B cell (primary cell): ENCODE measurements at regions of chr20 and their contacts with region 1.

Region 1: GRCh38 chr20:62386383-62387218 is at the start of gene RPS21:
- DNase-seq: peak; percentile 95
- ATAC-seq: peak; percentile 87
- H3K4me3 ChIP-seq: peak within 1 kb of the TSS; percentile 78 to 93 (median 91)
- H3K4me3 Mint-ChIP-seq: peak within 1 kb of the TSS; percentile 94
- H3K27ac ChIP-seq: peak within 1 kb of the TSS; percentile 88 to 89
- H3K27ac Mint-ChIP-seq: peak within 1 kb of the TSS; percentile 94
- H3K4me1 ChIP-seq: peaks cover 18 to 34% of the 10 kb centered on the region in 2 donors
- H3K4me1 Mint-ChIP-seq: peaks cover 48% of the 10 kb centered on the region
- H3K27me3 ChIP-seq: no peaks in the 10 kb centered on the region
- H3K27me3 Mint-ChIP-seq: no peaks in the 10 kb centered on the region
- CTCF ChIP-seq: no peak
- total RNA-seq, gene RPS21: 2,429 and 2,653 TPM in 2 replicates

Region 2: DNA sequence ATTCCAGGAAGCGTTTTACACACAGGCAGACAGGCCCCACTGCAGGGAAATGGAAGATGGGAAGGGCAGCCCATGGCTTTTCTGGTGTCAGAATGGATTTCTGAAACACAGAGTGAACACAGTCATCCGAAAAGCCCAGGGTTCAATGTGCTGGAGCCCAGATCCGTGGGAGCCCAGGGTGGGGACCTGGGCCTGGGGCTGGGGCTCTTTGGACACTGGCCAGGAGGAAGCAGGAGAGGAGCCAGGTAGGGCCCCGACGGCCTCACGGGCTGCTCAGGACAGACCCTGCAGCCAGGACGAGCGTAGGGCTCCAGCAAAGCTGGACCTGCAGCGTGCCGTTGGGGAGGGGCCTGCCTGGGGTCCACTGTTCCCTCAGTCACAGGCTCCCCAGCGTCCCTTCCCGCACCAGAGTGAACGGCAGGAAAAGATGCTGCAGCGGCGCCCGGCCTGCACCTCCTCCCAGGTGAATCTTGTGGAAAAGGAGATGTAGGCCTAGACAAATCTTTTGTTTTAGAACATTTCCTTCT is 288.7 kb before region 1 on chr20:
- CTCF ChIA-PET with region 1: no interaction called
- POLR2A ChIA-PET with region 1: no interaction called
- intact Hi-C with region 1: no loop called
- DNase-seq: no peak
- ATAC-seq: no peak
- H3K4me3 ChIP-seq: no peak overlapping the region
- H3K4me3 Mint-ChIP-seq: no peak overlapping the region
- H3K27ac ChIP-seq: no peak overlapping the region
- H3K27ac Mint-ChIP-seq: no peak overlapping the region
- H3K4me1 ChIP-seq: no peaks in the 10 kb centered on the region
- H3K4me1 Mint-ChIP-seq: no peaks in the 10 kb centered on the region
- H3K27me3 ChIP-seq: peaks cover 0 to 13% (median 3%) of the 10 kb centered on the region in 4 experiments
- H3K27me3 Mint-ChIP-seq: peaks cover 15% of the 10 kb centered on the region
- CTCF ChIP-seq: no peak

Region 3: GRCh38 chr20:62182613-62183425 is 203.8 kb before region 1 on chr20 and contains the start of gene MTG2:
- CTCF ChIA-PET with region 1: no interaction called
- POLR2A ChIA-PET with region 1: no interaction called
- intact Hi-C with region 1: loop called (anchors 2 kb)
- DNase-seq: peak; percentile 96
- ATAC-seq: peak; percentile 90
- H3K4me3 ChIP-seq: peak within 1 kb of the TSS; percentile 81 to 88 (median 84)
- H3K4me3 Mint-ChIP-seq: peak within 1 kb of the TSS; percentile 97
- H3K27ac ChIP-seq: peak within 1 kb of the TSS; percentile 86 to 97
- H3K27ac Mint-ChIP-seq: peak within 1 kb of the TSS; percentile 98
- H3K4me1 ChIP-seq: peaks cover 13 to 18% of the 10 kb centered on the region in 2 donors
- H3K4me1 Mint-ChIP-seq: peaks cover 39% of the 10 kb centered on the region
- H3K27me3 ChIP-seq: no peaks in the 10 kb centered on the region
- H3K27me3 Mint-ChIP-seq: no peaks in the 10 kb centered on the region
- CTCF ChIP-seq: no peak
- total RNA-seq, gene MTG2: 47.6 and 48.4 TPM in 2 replicates

Region 4: GRCh38 chr20:62339647-62340070 is 46.9 kb before region 1 on chr20:
- CTCF ChIA-PET with region 1: interaction called, 16 read pairs
- POLR2A ChIA-PET with region 1: interaction called, 8 read pairs
- intact Hi-C with region 1: loop called (anchors 5 kb)
- DNase-seq: peak; percentile 90
- ATAC-seq: peak; percentile 59
- H3K4me3 ChIP-seq: peak overlapping the region in 4 of 5 experiments; percentile 31 to 68 (median 50)
- H3K4me3 Mint-ChIP-seq: peak overlapping the region; percentile 84
- H3K27ac ChIP-seq: peak overlapping the region; percentile 86 to 87
- H3K27ac Mint-ChIP-seq: peak overlapping the region; percentile 95
- H3K4me1 ChIP-seq: peaks cover 53 to 61% of the 10 kb centered on the region in 2 donors
- H3K4me1 Mint-ChIP-seq: peaks cover 48% of the 10 kb centered on the region
- H3K27me3 ChIP-seq: no peaks in the 10 kb centered on the region
- H3K27me3 Mint-ChIP-seq: no peaks in the 10 kb centered on the region
- CTCF ChIP-seq: no peak

Region 5: GRCh38 chr20:62357187-62357667 is 29.4 kb before region 1 on chr20:
- CTCF ChIA-PET with region 1: no interaction called
- POLR2A ChIA-PET with region 1: no interaction called
- intact Hi-C with region 1: no loop called
- DNase-seq: no peak
- ATAC-seq: no peak
- H3K4me3 ChIP-seq: no peak overlapping the region
- H3K4me3 Mint-ChIP-seq: no peak overlapping the region
- H3K27ac ChIP-seq: no peak overlapping the region
- H3K27ac Mint-ChIP-seq: no peak overlapping the region
- H3K4me1 ChIP-seq: peaks cover 0 to 6% of the 10 kb centered on the region in 2 donors
- H3K4me1 Mint-ChIP-seq: no peaks in the 10 kb centered on the region
- H3K27me3 ChIP-seq: no peaks in the 10 kb centered on the region
- H3K27me3 Mint-ChIP-seq: no peaks in the 10 kb centered on the region
- CTCF ChIP-seq: no peak

Region 6: DNA sequence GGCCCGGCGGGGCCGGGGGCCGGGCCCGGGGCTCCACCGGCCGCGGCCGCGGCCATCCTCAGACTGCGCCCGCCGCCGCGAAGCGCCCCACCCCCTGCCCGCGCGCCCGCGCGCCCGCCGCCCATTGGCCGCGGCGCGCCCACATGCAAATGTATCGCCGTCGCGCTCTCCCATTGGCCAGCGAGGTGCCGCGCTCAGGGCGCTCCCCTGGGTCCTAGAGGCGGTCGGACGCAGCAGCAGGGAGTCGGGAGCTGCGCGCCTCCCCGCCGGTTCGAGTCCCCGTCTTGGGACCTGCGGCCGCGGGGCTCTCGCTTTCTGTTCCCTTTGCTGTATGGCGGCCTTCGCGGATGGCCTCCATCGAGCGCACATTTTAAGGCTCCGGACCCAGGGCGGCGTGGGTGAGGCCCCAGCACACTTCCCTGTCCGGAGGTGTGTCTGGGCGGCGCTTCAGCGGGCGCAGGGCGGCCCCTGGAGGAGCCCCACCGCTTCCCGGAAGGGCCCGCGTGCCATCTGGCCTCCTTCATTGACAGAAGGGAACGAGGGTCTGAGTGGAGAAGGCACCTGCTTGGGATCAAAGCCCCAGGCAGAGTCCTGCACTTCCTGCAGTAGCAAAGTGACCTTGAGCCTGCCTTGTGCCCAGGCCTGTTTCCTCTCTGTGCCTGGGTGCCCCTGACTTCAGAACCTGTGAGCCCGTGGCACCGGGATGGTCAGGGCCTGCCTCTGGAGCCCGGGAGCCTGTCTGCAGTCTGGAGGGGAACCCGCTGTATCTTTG is 20.8 kb after region 1 on chr20 and contains the start of gene CABLES2:
- CTCF ChIA-PET with region 1: interaction called, 7 read pairs
- POLR2A ChIA-PET with region 1: interaction called, 7 read pairs
- intact Hi-C with region 1: loop called (anchors 1 kb)
- DNase-seq: peak; percentile 95
- ATAC-seq: peak; percentile 90
- H3K4me3 ChIP-seq: peak within 1 kb of the TSS; percentile 36 to 71 (median 67)
- H3K4me3 Mint-ChIP-seq: peak within 1 kb of the TSS; percentile 90
- H3K27ac ChIP-seq: peak within 1 kb of the TSS; percentile 59 to 66
- H3K27ac Mint-ChIP-seq: peak within 1 kb of the TSS; percentile 87
- H3K4me1 ChIP-seq: peaks cover 30 to 41% of the 10 kb centered on the region in 2 donors
- H3K4me1 Mint-ChIP-seq: peaks cover 30% of the 10 kb centered on the region
- H3K27me3 ChIP-seq: no peaks in the 10 kb centered on the region
- H3K27me3 Mint-ChIP-seq: no peaks in the 10 kb centered on the region
- CTCF ChIP-seq: no peak
- total RNA-seq, gene CABLES2: 8.2 and 8.6 TPM in 2 replicates

Region 7: DNA sequence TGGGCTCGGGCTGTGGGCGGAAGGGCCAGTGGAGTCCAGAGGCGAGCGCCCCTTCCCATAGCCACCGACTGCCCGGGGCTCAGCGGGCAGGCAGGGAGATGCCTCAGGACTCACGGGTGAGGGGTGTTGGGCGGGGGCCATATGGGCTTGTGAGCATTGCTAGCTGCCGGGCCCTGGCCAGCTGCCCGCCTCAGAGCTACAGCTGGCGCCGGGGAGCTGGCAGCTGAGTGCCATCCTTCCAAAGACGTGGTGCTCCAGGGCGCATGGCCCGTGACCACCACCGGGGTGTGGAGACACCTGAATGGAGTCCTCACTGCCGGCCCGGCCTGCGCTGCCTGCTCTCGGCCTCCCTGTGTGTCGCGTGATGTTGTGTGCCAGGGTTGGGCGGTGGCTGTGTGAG is 51.3 kb after region 1 on chr20:
- CTCF ChIA-PET with region 1: no interaction called
- POLR2A ChIA-PET with region 1: no interaction called
- intact Hi-C with region 1: no loop called
- DNase-seq: no peak
- ATAC-seq: no peak
- H3K4me3 ChIP-seq: no peak overlapping the region
- H3K4me3 Mint-ChIP-seq: no peak overlapping the region
- H3K27ac ChIP-seq: no peak overlapping the region
- H3K27ac Mint-ChIP-seq: no peak overlapping the region
- H3K4me1 ChIP-seq: peaks cover 0 to 3% of the 10 kb centered on the region in 2 donors
- H3K4me1 Mint-ChIP-seq: peaks cover 2% of the 10 kb centered on the region
- H3K27me3 ChIP-seq: peaks cover 0 to 18% (median 0%) of the 10 kb centered on the region in 4 experiments
- H3K27me3 Mint-ChIP-seq: peaks cover 35% of the 10 kb centered on the region
- CTCF ChIP-seq: no peak

Region 8: GRCh38 chr20:62454904-62455636 is 68.5 kb after region 1 on chr20:
- CTCF ChIA-PET with region 1: no interaction called
- POLR2A ChIA-PET with region 1: no interaction called
- intact Hi-C with region 1: no loop called
- DNase-seq: no peak
- ATAC-seq: no peak
- H3K4me3 ChIP-seq: no peak overlapping the region
- H3K4me3 Mint-ChIP-seq: no peak overlapping the region
- H3K27ac ChIP-seq: no peak overlapping the region
- H3K27ac Mint-ChIP-seq: no peak overlapping the region
- H3K4me1 ChIP-seq: no peaks in the 10 kb centered on the region
- H3K4me1 Mint-ChIP-seq: no peaks in the 10 kb centered on the region
- H3K27me3 ChIP-seq: peaks cover 0 to 4% (median 0%) of the 10 kb centered on the region in 4 experiments
- H3K27me3 Mint-ChIP-seq: peaks cover 10% of the 10 kb centered on the region
- CTCF ChIP-seq: no peak